OCI-LY7 (cell line): ENCODE measurements at regions of chr20 and their contacts with region 1.

Region 1: GRCh38 chr20:62642040-62642665 is at the start of gene SLCO4A1:
- DNase-seq: peak; percentile 90
- H3K4me3 ChIP-seq: peak within 1 kb of the TSS; percentile 94
- H3K27ac ChIP-seq: peak within 1 kb of the TSS; percentile 53
- H3K4me1 ChIP-seq: peaks cover 54% of the 10 kb centered on the region
- CTCF ChIP-seq: no peak
- total RNA-seq, gene SLCO4A1: 34.4 and 52.4 TPM in 2 replicates

Region 2: DNA sequence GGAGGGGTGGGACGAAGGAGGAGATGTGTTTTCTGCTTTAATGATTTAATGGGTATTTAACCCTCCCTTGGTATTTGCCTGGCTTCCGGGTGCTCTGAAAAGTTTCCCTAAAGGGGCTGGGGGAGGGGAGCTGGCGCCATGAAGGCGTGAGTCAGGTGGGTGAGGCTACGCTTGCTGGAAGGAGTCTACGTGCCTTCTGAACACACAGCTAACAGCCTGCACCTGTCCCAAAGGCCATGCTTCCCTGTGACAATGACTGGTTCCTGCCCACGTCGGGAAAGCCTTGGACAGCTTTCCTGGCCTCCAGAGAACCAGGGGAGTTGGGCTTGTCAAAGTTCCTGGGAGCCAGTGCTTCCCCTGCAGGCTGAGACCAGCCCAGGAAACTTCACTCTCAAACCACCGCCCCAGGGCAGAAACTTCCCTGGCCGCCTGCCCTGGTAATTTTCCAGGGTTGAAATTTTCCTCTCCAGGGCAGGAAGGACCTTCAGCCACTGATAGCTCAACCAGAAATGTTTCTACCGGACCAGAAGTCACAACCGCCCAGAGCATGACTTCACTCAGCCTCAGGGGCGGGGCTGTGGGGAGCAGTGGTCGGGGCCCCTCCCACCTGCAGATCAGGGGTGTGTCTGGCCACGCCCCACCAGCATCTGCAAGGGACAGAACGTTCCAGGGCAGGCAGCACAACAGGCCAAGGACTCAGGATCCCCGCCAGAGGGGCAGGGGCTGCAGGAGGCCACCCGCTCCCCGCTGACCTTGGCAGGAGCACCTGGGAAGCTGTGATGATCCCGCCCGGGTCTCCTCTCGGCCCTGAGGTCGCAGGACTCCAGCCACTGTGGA is 18.4 kb before region 1 on chr20:
- CTCF ChIA-PET with region 1: no interaction called
- POLR2A ChIA-PET with region 1: interaction called, 14 read pairs
- intact Hi-C with region 1: loop called (anchors 1 kb)
- DNase-seq: peak; percentile 95
- H3K4me3 ChIP-seq: peak overlapping the region; percentile 58
- H3K27ac ChIP-seq: peak overlapping the region; percentile 75
- H3K4me1 ChIP-seq: peaks cover 51% of the 10 kb centered on the region
- CTCF ChIP-seq: no peak

Region 3: GRCh38 chr20:62675156-62675876 is 33.2 kb after region 1 on chr20:
- CTCF ChIA-PET with region 1: no interaction called
- POLR2A ChIA-PET with region 1: no interaction called
- intact Hi-C with region 1: no loop called
- DNase-seq: no peak
- H3K4me3 ChIP-seq: no peak overlapping the region
- H3K27ac ChIP-seq: no peak overlapping the region
- H3K4me1 ChIP-seq: no peaks in the 10 kb centered on the region
- CTCF ChIP-seq: no peak

Region 4: DNA sequence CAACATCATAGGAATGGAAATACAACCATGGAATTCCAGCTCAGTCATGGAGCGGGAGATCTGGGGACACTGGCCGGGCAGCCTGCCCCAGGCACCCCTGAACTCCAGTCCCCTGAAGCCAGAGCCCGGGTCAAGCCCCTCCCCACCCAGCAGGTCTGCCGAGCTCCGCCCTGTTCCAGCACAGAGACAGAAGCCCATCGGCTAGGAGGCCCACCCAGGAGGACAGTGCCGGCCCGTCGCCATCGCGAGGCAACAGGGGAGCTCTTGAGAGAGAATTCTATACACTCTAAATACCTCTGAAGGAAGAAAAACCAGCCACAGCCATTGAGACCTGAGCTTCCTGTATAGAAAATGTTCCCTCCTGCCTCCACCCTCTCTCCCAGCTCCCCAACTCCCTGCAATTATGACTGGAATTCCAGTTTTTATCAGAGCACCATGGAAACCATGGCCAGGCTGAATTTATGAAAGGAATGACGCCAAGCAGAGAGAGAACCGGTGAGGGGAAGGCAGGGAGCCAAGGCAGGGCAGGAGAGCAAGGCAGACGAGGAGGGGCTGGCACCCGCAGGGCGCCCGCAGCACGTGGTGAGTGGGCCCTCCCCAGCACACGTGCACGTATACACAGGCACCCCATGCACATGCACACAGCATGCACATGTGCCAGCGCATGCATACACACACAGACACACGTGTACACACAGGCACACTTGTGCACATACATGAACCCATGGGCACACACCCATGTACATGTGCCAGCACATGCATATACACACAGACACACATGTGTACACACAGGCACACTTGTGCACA is 126.5 kb after region 1 on chr20:
- CTCF ChIA-PET with region 1: no interaction called
- POLR2A ChIA-PET with region 1: no interaction called
- intact Hi-C with region 1: no loop called
- DNase-seq: no peak
- H3K4me3 ChIP-seq: no peak overlapping the region
- H3K27ac ChIP-seq: no peak overlapping the region
- H3K4me1 ChIP-seq: peaks cover 18% of the 10 kb centered on the region
- CTCF ChIP-seq: no peak